ENCODE measurements at regions of chr2 and their contacts with region 1.

Region 1: GRCh38 chr2:120694034-120694433 is 41.6 kb upstream of the GLI2 start:
- DNase-seq: no peak

Region 2: DNA sequence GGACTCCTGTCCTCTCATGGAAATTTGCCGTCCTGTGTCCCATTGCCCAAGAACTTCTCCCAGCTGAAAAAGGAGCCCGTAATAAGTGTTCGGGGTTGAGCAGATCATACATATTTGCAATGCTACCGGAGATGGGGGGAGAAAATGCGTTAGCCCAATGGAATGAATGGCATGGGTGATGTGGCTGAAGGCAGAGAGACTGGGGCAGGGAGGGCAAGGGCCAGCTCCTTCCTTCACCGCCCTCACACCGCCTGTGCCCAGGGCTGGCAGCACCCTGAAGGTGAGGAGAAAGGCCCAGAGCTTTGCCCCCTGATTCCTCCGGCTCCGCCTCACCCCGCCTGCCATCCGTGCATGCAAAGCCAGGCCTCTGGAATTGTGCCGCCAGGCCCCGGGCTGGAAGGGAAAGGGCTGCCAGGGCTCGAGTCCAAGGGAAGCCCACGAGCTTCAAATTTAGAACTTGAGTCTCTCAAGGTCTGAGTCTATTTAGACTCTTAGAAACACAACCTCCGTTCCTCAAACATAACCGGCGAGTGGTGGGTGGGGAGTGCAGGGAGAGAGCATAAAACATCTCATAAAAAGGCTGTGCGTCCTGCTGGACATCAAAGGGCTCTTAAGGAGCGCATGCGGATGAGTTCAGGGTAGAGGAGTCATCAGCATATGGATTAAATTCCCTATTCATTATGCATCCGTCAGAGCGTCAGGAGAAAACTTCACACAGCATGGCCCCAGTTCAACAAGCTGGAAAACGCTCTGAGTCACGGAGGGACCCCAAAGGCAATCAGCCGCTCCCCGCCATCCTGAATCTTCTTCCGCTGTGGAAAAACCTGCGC is 80.1 kb before region 1 on chr2:
- CTCF ChIA-PET with region 1: no interaction called
- POLR2A ChIA-PET with region 1: no interaction called
- DNase-seq: no peak

Region 3: GRCh38 chr2:120793677-120794403 is 99.8 kb after region 1 on chr2:
- CTCF ChIA-PET with region 1: no interaction called
- POLR2A ChIA-PET with region 1: no interaction called
- DNase-seq: no peak

Region 4: GRCh38 chr2:120914839-120915521 is 220.9 kb after region 1 on chr2:
- CTCF ChIA-PET with region 1: no interaction called
- POLR2A ChIA-PET with region 1: no interaction called
- DNase-seq: no peak

Region 5: DNA sequence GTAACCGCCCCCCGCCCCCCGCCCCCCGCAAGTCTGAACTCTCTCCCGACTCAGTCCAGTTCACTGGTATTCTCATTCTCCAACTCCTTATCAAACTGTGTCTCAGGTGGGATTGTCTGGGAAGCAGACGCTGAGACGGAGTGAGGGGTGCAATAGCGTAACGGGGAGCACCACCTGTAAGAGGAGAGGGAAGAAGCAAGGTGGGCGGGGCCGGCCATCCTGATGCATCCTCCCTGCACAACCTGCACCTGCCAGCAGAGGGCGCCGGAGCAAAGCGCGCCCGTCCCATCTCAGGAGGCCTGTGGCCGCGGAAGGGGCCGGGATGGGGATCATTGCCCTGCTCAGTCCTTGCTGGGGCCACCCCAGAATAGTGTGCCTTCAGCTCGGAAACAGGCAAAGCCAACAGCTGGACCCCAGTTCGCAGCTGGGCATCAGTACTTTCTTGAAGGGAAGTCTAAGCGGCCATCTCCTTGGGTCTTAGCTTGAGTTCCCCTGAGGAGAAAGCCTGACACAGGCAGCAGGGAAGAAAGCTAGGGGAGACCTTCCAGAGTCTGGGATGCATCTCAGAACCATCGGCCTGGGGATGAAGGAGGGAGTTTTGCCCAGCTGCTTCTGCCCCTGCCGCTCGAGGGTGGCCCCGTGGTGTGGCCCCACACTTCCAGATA is 383.0 kb after region 1 on chr2:
- CTCF ChIA-PET with region 1: interaction called, 22 read pairs
- POLR2A ChIA-PET with region 1: interaction called, 19 read pairs
- DNase-seq: peak; percentile 79